K562 (cell line): ENCODE measurements at regions of chr15 and their contacts with region 1.

Region 1: GRCh38 chr15:32844118-32844711 is 126.4 kb downstream of the GREM1 start:
- DNase-seq: peak; percentile 26 to 29 (median 28)
- ATAC-seq: peak; percentile 39; the same call in 1 of the 3 replicates
- H3K4me3 ChIP-seq: no peak overlapping the region
- H3K27ac ChIP-seq: no peak overlapping the region
- H3K4me1 ChIP-seq: no peaks in the 10 kb centered on the region
- H3K27me3 ChIP-seq: peaks cover 13 to 15% of the 10 kb centered on the region in 2 experiments; a peak in 3 of 5 replicates
- CTCF ChIP-seq: peak; percentile 46 to 64 (median 47); a peak in 5 of 6 replicates
- EP300 ChIP-seq: no peak
- POLR2A ChIP-seq: no peak
- RAD21 ChIP-seq: peak; percentile 10 to 41; a peak in 1 of 4 replicates

Region 2: GRCh38 chr15:32936283-32936918 is 92.2 kb after region 1 on chr15:
- CTCF ChIA-PET with region 1: no interaction called
- POLR2A ChIA-PET with region 1: no interaction called
- in situ Hi-C with region 1: no loop called
- intact Hi-C with region 1: loop called (anchors 10 kb)
- DNase-seq: peak; percentile 9 to 13 (median 12)
- ATAC-seq: peak; percentile 62; the same call in 2 of the 3 replicates
- H3K4me3 ChIP-seq: no peak overlapping the region
- H3K27ac ChIP-seq: no peak overlapping the region
- H3K4me1 ChIP-seq: no peaks in the 10 kb centered on the region
- H3K27me3 ChIP-seq: no peaks in the 10 kb centered on the region; a peak in 2 of 5 replicates
- CTCF ChIP-seq: peak; percentile 21 to 50 (median 44); a peak in 4 of 6 replicates
- EP300 ChIP-seq: no peak
- POLR2A ChIP-seq: no peak
- RAD21 ChIP-seq: peak in 1 of 2 experiments; percentile 26; a peak in 1 of 4 replicates

Region 3: DNA sequence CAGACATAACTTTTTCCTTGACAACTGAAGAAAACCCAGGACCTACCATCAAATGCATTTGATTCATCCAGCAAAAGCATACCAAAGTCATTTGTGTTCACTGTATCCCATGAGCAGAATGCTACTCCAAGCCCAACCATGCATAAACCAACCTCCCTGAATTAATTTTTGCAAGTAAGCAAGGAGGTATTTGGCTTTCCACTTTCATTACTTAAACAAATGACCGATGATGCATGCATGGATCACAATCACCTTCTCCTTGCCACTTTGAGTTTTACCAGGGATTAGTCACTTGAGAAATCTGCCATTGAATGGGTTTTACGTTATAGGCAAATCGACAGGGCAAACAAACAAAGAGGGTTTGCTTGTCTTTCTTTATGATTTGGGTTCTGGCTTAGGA is 135.5 kb after region 1 on chr15:
- CTCF ChIA-PET with region 1: no interaction called
- POLR2A ChIA-PET with region 1: no interaction called
- in situ Hi-C with region 1: no loop called
- intact Hi-C with region 1: no loop called
- DNase-seq: no peak
- ATAC-seq: no peak
- H3K4me3 ChIP-seq: no peak overlapping the region
- H3K27ac ChIP-seq: no peak overlapping the region
- H3K4me1 ChIP-seq: no peaks in the 10 kb centered on the region
- H3K27me3 ChIP-seq: no peaks in the 10 kb centered on the region
- CTCF ChIP-seq: no peak
- EP300 ChIP-seq: no peak
- POLR2A ChIP-seq: no peak
- RAD21 ChIP-seq: no peak

Region 4: DNA sequence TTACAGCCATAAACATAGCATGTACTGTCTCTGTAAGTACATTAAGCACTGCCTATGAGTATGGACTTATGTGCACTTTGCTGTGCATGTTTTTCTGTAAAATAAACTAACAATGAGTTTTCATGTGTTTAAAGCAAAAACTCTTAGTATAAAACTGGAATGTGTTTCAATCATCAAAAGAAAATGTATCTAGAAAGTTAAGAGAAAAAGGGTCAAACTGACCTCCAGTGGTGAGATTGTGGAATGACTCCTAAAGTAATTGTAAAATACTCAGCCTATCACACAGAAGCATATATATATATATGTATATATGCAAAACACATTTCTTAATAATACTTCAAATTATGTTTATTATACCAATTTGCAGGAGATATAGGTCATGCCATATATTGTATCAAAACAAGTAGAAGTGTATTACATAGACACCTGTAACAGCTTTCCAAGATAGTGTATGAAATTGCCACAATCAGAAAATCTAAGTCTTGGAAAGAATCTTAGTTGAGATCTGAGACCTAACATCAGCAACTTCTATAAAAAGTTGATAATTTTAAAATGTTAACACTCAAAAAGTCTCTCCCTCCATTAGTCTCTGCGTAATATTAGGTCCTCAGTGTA is 150.7 kb after region 1 on chr15:
- CTCF ChIA-PET with region 1: interaction called, 5 read pairs
- POLR2A ChIA-PET with region 1: no interaction called
- in situ Hi-C with region 1: no loop called
- intact Hi-C with region 1: loop called (anchors 10 kb)
- DNase-seq: peak; percentile 23 to 26 (median 25)
- ATAC-seq: peak; percentile 71
- H3K4me3 ChIP-seq: no peak overlapping the region
- H3K27ac ChIP-seq: no peak overlapping the region
- H3K4me1 ChIP-seq: no peaks in the 10 kb centered on the region
- H3K27me3 ChIP-seq: no peaks in the 10 kb centered on the region; a peak in 2 of 5 replicates
- CTCF ChIP-seq: peak in 2 of 3 experiments; percentile 22 to 64; a peak in 3 of 6 replicates
- EP300 ChIP-seq: no peak
- POLR2A ChIP-seq: no peak
- RAD21 ChIP-seq: peak; percentile 33 to 54